Panc1 (cell line): ENCODE measurements at regions of chr19 and their contacts with region 1.

Region 1: DNA sequence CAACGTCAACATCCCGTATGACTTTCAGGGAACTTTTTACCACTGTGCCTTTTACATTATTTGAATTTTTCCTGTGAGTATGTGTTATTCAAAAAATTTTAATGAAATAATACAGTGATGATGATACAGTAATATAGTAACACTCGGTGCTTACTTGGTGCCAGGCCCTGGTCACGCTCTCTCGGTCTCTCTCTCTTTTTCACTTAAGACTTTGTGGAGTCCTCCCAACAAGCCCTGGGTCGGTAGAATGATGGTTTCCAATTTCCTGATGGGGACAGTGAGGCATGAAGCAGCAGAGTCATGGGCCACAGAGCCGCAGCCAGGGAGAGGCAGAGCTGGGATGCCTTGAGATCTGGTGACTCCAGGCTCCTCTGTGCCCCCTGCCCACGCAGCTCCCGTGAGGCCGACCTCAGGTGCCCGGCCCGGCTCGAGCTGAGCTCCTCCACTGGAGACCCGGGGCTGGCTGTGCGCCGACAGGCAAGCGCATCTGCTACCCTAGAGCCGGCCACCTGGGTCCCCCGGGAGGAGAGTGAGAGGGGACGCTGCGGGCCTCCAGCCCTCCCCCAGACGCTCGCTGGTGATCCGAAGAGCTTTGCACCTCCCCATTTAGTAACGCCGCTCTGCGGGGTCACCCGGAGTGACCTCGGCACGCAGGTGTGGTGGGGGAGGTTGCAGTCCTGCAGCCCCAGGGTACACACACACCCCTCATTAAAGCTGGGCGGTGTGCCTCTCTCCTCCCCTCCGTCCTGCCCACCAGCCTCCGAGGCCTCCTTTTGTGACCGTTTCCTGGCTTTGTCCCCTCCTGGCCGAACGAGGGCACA is 4.4 kb upstream of the SBK3 start:
- DNase-seq: peak; percentile 87
- ATAC-seq: peak; percentile 69
- H3K4me3 ChIP-seq: peak overlapping the region; percentile 37 to 48
- H3K27ac ChIP-seq: peak overlapping the region; percentile 94
- H3K4me1 ChIP-seq: peaks cover 62% of the 10 kb centered on the region
- H3K27me3 ChIP-seq: no peaks in the 10 kb centered on the region
- CTCF ChIP-seq: no peak

Region 2: GRCh38 chr19:55516878-55517620 is 32.7 kb before region 1 on chr19:
- CTCF ChIA-PET with region 1: no interaction called
- POLR2A ChIA-PET with region 1: no interaction called
- in situ Hi-C with region 1: no loop called
- intact Hi-C with region 1: no loop called
- DNase-seq: peak; percentile 81
- ATAC-seq: peak; percentile 99
- H3K4me3 ChIP-seq: peak overlapping the region; percentile 37 to 51
- H3K27ac ChIP-seq: peak overlapping the region; percentile 84
- H3K4me1 ChIP-seq: peaks cover 7% of the 10 kb centered on the region; the same call in 1 of the 2 replicates
- H3K27me3 ChIP-seq: no peaks in the 10 kb centered on the region
- CTCF ChIP-seq: peak; percentile 98

Region 3: GRCh38 chr19:55580628-55581144 is 31.0 kb after region 1 on chr19 and contains the start of gene ZNF579:
- CTCF ChIA-PET with region 1: no interaction called
- POLR2A ChIA-PET with region 1: no interaction called
- in situ Hi-C with region 1: no loop called
- intact Hi-C with region 1: loop called (anchors 5 kb)
- DNase-seq: peak; percentile 61
- ATAC-seq: peak; percentile 87
- H3K4me3 ChIP-seq: peak within 1 kb of the TSS; percentile 44 to 96
- H3K27ac ChIP-seq: peak within 1 kb of the TSS; percentile 88
- H3K4me1 ChIP-seq: peaks cover 15% of the 10 kb centered on the region
- H3K27me3 ChIP-seq: no peaks in the 10 kb centered on the region
- CTCF ChIP-seq: no peak
- total RNA-seq, gene ZNF579: 39.5 TPM